Cardiac septum (tissue), 1 donor: ENCODE measurements at regions of chr2 and their contacts with region 1.

Region 1: GRCh38 chr2:44167940-44168680 is 565 bp upstream of the PPM1B start:
- DNase-seq: peak; percentile 99

Region 2: DNA sequence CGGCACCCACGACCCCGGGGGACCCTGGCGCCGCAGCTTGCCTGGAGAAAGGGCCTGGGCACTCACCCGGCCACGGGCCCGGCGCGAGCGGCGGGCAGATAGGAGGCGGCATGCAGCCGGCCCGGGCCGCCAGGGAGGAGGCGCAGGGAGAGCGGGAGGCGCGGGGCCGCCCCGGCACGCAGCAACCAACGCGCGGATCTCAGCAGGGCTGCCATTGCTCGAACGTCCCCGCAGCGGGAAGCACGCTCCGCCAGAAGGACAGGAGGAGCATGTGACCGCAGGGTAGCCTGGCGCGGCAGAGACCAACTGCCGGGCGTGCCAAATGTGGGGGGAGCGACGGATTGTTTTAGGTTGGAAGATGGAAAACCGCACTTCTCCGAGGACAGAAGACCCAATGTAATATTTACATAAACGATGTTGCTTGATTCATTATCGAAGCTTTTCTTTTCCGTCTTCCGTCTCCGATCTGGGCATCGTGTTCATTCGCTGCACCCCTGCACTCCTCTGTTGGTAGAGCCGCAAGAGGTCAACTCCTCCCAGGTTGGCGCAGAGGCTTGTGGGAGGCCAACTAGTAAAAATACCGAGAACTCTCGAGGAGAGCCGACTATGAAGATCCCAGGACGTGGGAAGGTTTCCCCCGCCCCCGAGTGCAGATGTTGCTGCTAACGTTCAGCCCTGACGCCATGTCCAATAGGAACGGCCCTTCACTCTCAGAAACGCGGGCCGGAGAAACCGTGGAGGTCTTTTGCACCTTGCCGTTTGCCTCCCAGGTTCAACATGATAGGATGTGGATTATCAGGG is 172.2 kb before region 1 on chr2 and contains the start of gene LRPPRC:
- intact Hi-C with region 1: loop called (anchors 2 kb)
- DNase-seq: peak; percentile 95
- total RNA-seq, gene LRPPRC: 70.3 TPM

Region 3: DNA sequence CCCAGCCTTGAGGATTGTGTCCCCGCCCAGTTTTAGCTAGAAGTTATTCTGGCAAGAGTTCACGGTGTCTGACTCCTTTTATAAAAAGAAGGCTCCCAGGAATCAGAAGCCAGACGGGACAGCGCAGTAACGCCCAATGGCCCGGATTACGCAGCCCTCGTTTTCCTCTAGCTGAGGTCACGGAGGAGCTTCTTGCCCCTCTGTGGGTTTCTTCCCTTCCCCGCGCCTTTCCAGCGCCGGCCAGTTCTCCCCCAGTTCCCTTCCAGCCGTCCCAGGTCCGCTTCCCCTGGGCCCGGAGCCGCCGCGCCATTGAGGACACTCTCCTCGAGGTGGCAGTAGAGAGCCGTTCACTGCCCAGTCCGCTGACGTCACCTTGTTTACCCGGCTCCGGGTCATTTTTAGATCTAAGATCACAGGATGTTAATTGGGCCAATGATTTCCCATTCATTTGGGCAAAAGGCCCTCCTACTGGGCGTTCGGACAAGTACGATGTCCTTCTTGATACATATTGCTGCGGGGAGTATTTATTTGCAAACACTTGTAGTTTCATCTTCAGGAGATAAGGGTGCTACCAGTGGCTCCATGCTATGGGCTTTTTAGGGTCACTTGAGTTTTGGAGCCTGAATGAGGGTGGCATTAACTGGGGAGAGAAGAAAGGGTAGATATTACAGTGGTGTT is 80.9 kb before region 1 on chr2:
- intact Hi-C with region 1: loop called (anchors 5 kb)
- DNase-seq: peak; percentile 97

Region 4: GRCh38 chr2:44100351-44100750 is 67.8 kb before region 1 on chr2:
- intact Hi-C with region 1: loop called (anchors 5 kb)
- DNase-seq: peak; percentile 85

Region 5: GRCh38 chr2:44361330-44362206 is 193.5 kb after region 1 on chr2 and contains the starts of genes CAMKMT and PREPL:
- intact Hi-C with region 1: loop called (anchors 5 kb)
- DNase-seq: peak; percentile 100
- total RNA-seq, gene CAMKMT: 5.6 TPM
- total RNA-seq, gene PREPL: 82.1 TPM

Region 6: DNA sequence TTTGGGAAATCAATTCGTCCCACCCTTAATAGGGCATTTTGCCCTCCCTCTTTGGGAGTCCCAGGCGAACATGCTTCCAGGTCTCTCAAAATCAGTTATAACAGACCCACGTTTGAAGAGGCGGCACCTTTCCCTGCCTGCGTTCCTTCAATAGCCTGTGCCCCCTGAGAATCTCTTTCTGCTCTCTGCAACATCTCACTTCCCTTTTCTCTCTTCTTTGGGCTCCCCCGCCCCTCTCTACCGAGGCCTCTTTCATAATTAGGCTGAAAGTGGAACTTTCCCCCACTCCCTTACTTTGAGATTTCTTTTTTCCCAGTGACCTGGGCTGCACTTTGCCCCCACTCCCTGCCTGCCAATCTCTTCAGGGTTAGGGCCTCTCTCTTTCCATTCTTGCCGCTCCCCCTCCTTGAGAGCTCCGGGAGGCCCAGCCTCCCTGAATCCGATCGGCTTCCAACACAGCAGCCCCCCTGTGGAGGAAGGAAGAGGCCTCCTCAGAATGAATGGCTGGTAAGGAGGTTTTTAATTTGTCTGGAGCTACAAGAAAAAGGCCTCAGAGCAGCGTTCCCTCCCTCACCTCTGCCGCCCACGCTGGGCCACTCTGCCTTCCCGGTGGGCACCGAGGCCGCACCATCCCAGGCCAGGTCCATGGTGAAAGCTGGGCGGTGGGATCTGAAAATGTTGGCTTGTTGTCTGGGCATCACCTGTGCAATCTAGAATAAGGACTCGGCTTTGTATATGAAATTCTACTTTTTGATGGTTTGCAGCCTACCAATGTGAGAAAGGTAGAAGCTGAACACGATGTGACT is 610.8 kb after region 1 on chr2:
- intact Hi-C with region 1: no loop called
- DNase-seq: no peak